Heart right ventricle (tissue), 16 donors: ENCODE measurements at regions of chr9 and their contacts with region 1.

Region 1: GRCh38 chr9:71268871-71269635 is 147.6 kb upstream of the TRPM3 start:
- DNase-seq: no peak
- ATAC-seq: no peak
- H3K4me3 ChIP-seq: no peak overlapping the region
- H3K27ac ChIP-seq: no peak overlapping the region
- H3K4me1 ChIP-seq: no peaks in the 10 kb centered on the region
- H3K27me3 ChIP-seq: peaks cover 0 to 16% (median 0%) of the 10 kb centered on the region in 7 donors
- CTCF ChIP-seq: no peak

Region 2: DNA sequence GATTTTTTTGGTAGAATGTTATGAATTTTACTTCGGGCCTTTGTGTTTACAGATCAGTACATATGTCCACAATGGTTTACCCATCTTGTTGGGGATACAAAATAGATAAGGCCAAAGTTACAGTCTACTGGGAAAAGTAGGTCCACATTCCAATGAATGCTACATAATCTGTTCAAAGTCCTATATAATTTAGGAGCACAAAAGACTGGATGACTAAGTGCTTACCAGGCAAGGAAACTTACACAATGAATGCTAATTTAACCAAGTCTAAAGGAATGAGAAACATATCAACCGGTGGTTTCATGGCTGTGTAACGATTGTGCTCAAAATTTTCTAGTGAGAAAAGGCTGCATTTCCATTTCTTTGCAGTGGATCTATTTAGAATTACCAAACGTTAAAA is 50.3 kb before region 1 on chr9:
- intact Hi-C with region 1: loop called in 1 of 10 experiments (anchors 5 kb)
- DNase-seq: no peak
- ATAC-seq: no peak
- H3K4me3 ChIP-seq: no peak overlapping the region
- H3K27ac ChIP-seq: no peak overlapping the region
- H3K4me1 ChIP-seq: no peaks in the 10 kb centered on the region
- H3K27me3 ChIP-seq: no peaks in the 10 kb centered on the region
- CTCF ChIP-seq: no peak

Region 3: DNA sequence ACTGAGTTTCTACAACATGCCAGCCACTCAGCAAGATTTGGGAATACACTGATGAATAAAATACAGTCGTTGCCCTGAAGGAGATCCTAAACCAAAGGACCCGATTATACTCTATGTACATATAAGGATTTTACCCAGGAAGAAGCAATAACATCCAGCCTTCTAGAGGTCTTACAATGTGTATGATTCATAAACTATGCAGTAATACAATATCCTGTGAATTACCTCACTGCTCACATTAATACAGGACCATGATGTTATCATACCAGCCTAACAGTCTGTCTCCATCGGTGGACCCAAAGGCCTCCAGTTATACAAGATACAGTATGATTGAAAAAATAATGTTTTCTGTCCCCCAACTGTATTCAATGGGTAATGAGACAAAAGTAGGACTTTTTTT is 162.9 kb after region 1 on chr9:
- intact Hi-C with region 1: no loop called
- DNase-seq: no peak
- ATAC-seq: no peak
- H3K4me3 ChIP-seq: no peak overlapping the region
- H3K27ac ChIP-seq: no peak overlapping the region
- H3K4me1 ChIP-seq: no peaks in the 10 kb centered on the region
- H3K27me3 ChIP-seq: no peaks in the 10 kb centered on the region
- CTCF ChIP-seq: no peak

Region 4: DNA sequence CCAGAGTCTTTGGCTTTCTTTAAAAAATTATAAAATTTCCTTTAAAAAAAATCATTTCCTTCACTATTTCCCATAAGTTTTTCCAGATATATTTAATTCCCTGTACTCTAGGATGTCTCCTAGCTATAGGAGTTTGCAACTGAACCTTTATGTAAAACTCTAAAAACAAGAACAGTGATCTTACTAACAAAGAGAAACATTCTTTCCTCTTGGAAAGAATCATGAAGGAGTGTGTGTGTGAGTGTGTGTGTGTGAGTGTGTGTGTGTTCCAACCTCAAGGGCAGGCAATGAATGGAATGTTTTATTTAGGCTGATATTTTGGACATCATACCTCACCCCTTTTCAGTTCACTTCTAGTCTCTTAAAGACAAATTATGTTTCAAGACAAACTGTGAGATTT is 190.0 kb after region 1 on chr9:
- intact Hi-C with region 1: no loop called
- DNase-seq: no peak
- ATAC-seq: no peak
- H3K4me3 ChIP-seq: no peak overlapping the region
- H3K27ac ChIP-seq: no peak overlapping the region
- H3K4me1 ChIP-seq: no peaks in the 10 kb centered on the region
- H3K27me3 ChIP-seq: peaks cover 0 to 4% (median 0%) of the 10 kb centered on the region in 7 donors
- CTCF ChIP-seq: no peak